Caco-2 (cell line): ENCODE measurements at regions of chr22 and their contacts with region 1.

Region 1: DNA sequence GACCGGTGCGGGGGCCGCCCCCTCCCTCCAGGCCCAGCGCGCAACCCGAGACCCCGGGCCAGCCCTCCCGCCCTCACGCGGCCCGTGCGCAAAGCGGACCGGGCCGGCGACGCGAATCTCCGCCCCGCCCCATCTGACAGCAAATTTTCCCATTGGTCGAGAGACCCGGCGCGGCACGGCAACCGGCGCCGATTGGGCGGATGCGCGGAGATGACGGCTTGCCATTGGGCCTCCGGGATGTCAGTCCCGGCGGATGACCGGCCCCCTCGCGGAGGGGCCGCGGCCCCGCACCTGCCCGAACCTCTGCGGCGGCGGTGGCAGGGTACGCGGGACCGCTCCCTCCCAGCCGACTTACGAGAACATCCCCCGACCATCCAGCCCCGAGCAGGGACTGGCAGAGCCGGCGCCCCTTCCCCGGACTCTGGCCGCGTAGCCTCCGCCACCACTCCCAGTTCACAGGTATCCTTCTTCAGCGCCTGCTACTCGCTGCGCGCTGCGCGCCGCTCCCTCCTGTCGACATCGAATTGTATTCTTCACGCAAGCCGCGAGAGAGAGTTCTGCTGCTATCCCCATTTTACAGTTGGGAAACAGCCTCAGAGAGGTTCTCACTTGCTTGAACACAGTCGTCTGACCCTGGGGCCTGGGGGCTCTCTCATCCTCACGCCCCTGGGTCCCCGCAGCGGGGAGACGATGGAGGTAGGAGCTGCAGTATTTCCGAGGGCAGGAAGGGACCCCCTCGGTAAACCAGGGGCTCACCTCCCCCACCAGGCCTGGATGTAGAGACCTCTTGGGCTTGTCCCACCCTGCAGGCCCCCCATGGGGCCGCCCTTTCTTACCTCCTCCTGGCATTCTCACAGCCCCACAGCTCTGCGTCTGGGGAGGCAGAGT is at the start of gene ARVCF:
- DNase-seq: peak; percentile 90 to 96
- H3K4me3 ChIP-seq: peak within 1 kb of the TSS; percentile 57
- H3K4me3 Mint-ChIP-seq: peak within 1 kb of the TSS; percentile 85
- H3K27ac Mint-ChIP-seq: no peak within 1 kb of the TSS
- H3K4me1 ChIP-seq: peaks cover 13% of the 10 kb centered on the region
- H3K4me1 Mint-ChIP-seq: no peaks in the 10 kb centered on the region
- H3K27me3 ChIP-seq: no peaks in the 10 kb centered on the region; the same call in 1 of the 2 replicates
- H3K27me3 Mint-ChIP-seq: no peaks in the 10 kb centered on the region
- CTCF ChIP-seq: peak in 1 of 2 experiments; percentile 24
- total RNA-seq, gene ARVCF: 9.8 and 12.0 TPM in 2 replicates

Region 2: DNA sequence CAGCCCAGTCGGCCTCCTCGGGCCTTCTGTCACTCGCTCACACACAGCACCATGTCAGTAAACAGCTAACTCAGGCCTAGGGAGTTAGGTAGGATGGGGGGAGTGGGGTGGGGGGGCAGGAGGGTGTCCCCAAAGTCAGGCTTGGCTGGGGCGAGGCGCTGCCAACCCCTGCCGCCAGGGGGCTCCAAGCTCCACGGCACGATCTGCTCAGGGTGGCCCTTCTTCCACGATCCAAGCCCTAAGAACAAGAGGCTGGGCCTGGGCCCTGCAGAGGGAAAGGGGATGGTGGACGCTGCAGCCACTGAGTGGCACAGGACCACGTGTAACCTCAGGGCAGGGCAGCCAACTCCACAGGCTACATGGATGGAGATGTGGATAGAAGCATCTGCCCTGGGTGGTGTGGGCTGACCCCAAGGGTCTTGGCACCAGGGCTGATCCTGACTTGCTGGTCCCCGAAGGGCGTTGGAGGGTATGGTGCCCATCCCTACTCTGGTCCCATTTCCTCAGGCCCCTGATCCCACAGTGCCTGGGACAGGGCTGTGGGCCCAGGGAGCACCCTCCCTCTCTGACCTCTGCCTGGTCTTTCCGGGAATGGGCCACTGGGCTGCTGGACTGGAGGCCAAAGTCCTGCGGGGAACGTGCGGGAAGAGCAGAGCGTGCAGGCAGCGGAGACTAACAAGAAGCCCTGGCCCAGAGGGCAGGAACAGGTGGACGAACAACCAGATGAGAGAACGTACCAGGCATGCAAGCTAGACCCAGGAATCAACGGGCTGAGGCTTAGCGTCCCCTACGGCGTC is 46.3 kb before region 1 on chr22:
- CTCF ChIA-PET with region 1: interaction called, 17 read pairs
- POLR2A ChIA-PET with region 1: no interaction called
- intact Hi-C with region 1: loop called (anchors 2 kb)
- DNase-seq: peak; percentile 67 to 83
- H3K4me3 ChIP-seq: no peak overlapping the region
- H3K4me3 Mint-ChIP-seq: no peak overlapping the region
- H3K27ac Mint-ChIP-seq: peak overlapping the region; percentile 35
- H3K4me1 ChIP-seq: peaks cover 6% of the 10 kb centered on the region; the same call in 1 of the 2 replicates
- H3K4me1 Mint-ChIP-seq: peaks cover 13% of the 10 kb centered on the region
- H3K27me3 ChIP-seq: no peaks in the 10 kb centered on the region
- H3K27me3 Mint-ChIP-seq: no peaks in the 10 kb centered on the region
- CTCF ChIP-seq: peak; percentile 93 to 95

Region 3: DNA sequence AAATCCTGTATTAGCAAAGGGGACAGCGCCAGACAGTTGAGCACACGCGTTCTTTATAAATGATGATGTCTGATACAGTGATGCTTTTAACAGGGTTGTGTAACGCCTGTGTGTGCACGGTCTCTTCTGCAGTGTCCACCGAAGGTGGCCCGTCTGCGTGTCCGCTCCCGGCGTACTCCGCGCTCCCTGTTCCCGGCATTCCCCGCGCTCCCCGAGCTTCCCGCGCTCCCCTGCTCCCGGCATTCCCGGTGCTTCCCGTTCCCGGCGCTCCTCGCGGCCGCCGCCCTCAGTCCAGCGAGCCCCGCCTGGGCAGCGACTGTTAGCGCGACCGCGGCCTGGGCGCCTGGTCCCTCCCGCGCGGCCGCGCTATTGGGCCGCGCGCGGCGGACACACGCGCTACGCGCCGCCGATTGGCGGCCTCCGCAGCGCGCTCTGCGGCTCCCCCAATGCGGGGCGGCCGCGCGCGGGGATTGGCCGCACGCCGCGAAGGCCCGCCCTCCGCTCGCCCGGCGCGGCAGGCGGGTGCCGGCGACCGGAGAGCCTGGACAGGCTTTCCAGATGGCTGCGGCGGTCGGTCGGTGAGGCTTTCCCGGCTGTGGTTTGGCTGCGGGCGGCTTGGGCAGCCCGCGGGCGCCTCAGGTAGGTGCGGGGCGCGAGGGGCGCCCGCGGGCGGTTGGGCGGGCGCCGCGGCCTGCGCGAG is 62.9 kb after region 1 on chr22 and contains the start of gene DGCR8:
- CTCF ChIA-PET with region 1: no interaction called
- POLR2A ChIA-PET with region 1: interaction called, 4 read pairs
- intact Hi-C with region 1: loop called (anchors 5 kb)
- DNase-seq: peak; percentile 94 to 97
- H3K4me3 ChIP-seq: peak within 1 kb of the TSS; percentile 62
- H3K4me3 Mint-ChIP-seq: peak within 1 kb of the TSS; percentile 79
- H3K27ac Mint-ChIP-seq: peak within 1 kb of the TSS; percentile 92
- H3K4me1 ChIP-seq: peaks cover 23% of the 10 kb centered on the region
- H3K4me1 Mint-ChIP-seq: peaks cover 22% of the 10 kb centered on the region
- H3K27me3 ChIP-seq: no peaks in the 10 kb centered on the region
- H3K27me3 Mint-ChIP-seq: no peaks in the 10 kb centered on the region
- CTCF ChIP-seq: no peak
- total RNA-seq, gene DGCR8: 53.1 and 60.0 TPM in 2 replicates

Region 4: GRCh38 chr22:20111045-20111688 is 94.2 kb after region 1 on chr22:
- CTCF ChIA-PET with region 1: interaction called, 10 read pairs
- POLR2A ChIA-PET with region 1: no interaction called
- intact Hi-C with region 1: no loop called
- DNase-seq: peak; percentile 40 to 58
- H3K4me3 ChIP-seq: no peak overlapping the region
- H3K4me3 Mint-ChIP-seq: no peak overlapping the region
- H3K27ac Mint-ChIP-seq: no peak overlapping the region
- H3K4me1 ChIP-seq: 0 out of 2 replicates have a peak, but pooled peaks cover 3% of the 10 kb centered on the region
- H3K4me1 Mint-ChIP-seq: peaks cover 6% of the 10 kb centered on the region
- H3K27me3 ChIP-seq: no peaks in the 10 kb centered on the region
- H3K27me3 Mint-ChIP-seq: no peaks in the 10 kb centered on the region
- CTCF ChIP-seq: peak; percentile 30 to 38